ENCODE measurements at regions of chr11 and their contacts with region 1.

Region 1: GRCh38 chr11:126480410-126481302 is 125.2 kb downstream of the ST3GAL4 start:
- DNase-seq: peak; percentile 87
- H3K4me3 Mint-ChIP-seq: no peak overlapping the region
- H3K27ac Mint-ChIP-seq: peak overlapping the region; percentile 76
- H3K4me1 Mint-ChIP-seq: peaks cover 7% of the 10 kb centered on the region
- H3K27me3 Mint-ChIP-seq: no peaks in the 10 kb centered on the region
- CTCF ChIP-seq: peak; percentile 90

Region 2: GRCh38 chr11:126303623-126304456 is 176.8 kb before region 1 on chr11 and contains the start of gene DCPS:
- CTCF ChIA-PET with region 1: interaction called, 297 read pairs
- POLR2A ChIA-PET with region 1: interaction called, 10 read pairs
- intact Hi-C with region 1: no loop called
- DNase-seq: peak; percentile 88
- H3K4me3 Mint-ChIP-seq: peak within 1 kb of the TSS; percentile 89
- H3K27ac Mint-ChIP-seq: peak within 1 kb of the TSS; percentile 79
- H3K4me1 Mint-ChIP-seq: peaks cover 6% of the 10 kb centered on the region
- H3K27me3 Mint-ChIP-seq: no peaks in the 10 kb centered on the region
- CTCF ChIP-seq: no peak
- total RNA-seq, gene DCPS: 29.6 and 33.7 TPM in 2 replicates

Region 3: GRCh38 chr11:126318574-126319373 is 161.9 kb before region 1 on chr11:
- CTCF ChIA-PET with region 1: interaction called, 297 read pairs
- POLR2A ChIA-PET with region 1: interaction called, 5 read pairs
- intact Hi-C with region 1: no loop called
- DNase-seq: peak; percentile 74
- H3K4me3 Mint-ChIP-seq: peak overlapping the region; percentile 59
- H3K27ac Mint-ChIP-seq: peak overlapping the region; percentile 84
- H3K4me1 Mint-ChIP-seq: peaks cover 33% of the 10 kb centered on the region
- H3K27me3 Mint-ChIP-seq: no peaks in the 10 kb centered on the region
- CTCF ChIP-seq: no peak

Region 4: DNA sequence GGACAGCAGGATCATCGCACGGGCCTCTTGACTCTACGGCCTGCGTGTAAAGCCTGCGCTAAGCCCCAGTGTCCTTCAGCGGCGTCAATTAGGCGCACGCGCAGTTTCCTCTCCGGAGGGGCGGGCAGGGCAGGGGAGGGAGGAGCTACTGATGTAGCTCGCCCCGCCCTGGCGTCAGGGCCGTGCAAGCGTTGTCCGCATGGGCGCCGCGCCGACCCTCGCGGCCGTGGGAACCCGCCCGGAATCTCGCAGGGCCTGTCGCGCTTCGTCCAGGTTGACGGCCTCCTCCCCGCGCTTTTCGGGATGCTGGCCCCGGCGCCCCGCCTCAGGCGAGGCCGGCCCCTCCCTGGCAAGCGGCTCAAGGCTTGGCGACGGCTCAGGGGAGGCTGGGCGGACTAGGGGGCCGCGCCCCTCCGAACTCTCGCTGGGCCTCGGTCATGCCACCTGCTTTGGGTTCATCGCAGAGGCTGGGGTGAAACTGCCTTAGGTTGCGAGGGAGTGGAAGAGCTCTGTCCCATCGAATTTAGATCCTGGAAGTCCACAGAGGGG is 64.0 kb before region 1 on chr11:
- CTCF ChIA-PET with region 1: interaction called, 16 read pairs
- POLR2A ChIA-PET with region 1: no interaction called
- intact Hi-C with region 1: no loop called
- DNase-seq: no peak
- H3K4me3 Mint-ChIP-seq: no peak overlapping the region
- H3K27ac Mint-ChIP-seq: peak overlapping the region; percentile 23
- H3K4me1 Mint-ChIP-seq: no peaks in the 10 kb centered on the region
- H3K27me3 Mint-ChIP-seq: no peaks in the 10 kb centered on the region
- CTCF ChIP-seq: no peak

Region 5: GRCh38 chr11:126446581-126446980 is 34.1 kb before region 1 on chr11:
- CTCF ChIA-PET with region 1: interaction called, 111 read pairs
- POLR2A ChIA-PET with region 1: no interaction called
- intact Hi-C with region 1: loop called (anchors 1 kb)
- DNase-seq: no peak
- H3K4me3 Mint-ChIP-seq: no peak overlapping the region
- H3K27ac Mint-ChIP-seq: no peak overlapping the region
- H3K4me1 Mint-ChIP-seq: no peaks in the 10 kb centered on the region
- H3K27me3 Mint-ChIP-seq: no peaks in the 10 kb centered on the region
- CTCF ChIP-seq: no peak

Region 6: DNA sequence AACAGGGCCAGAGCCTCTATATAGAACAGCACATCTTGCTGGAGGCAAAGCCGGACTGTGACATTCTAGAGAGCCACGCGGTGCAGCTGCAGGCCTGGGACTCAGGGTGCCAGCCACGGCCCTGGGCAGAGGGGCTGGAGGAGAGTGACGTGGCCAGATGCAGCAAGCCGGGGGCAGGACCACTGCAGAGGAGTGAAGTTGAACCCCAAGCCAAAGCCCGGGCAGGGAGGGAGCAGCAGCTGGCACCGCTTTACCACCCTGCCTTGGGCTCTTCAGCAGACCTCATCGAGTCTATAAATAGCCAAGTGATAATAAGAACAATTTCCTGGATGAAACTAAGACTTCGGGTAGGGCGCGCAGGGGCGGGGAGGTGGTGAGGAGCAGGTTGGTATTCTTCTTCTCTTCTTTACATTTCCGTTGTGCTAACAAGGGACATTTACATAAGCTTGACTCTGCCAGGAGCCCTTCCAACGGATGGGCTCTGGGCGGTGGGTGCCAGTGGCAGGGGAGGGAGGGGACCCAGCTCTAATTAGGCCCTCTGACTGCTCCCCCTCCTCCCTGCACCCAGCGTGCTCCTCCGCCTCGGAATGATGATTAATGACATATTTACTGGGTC is 15.0 kb before region 1 on chr11:
- CTCF ChIA-PET with region 1: interaction called, 30 read pairs
- POLR2A ChIA-PET with region 1: no interaction called
- intact Hi-C with region 1: no loop called
- DNase-seq: no peak
- H3K4me3 Mint-ChIP-seq: no peak overlapping the region
- H3K27ac Mint-ChIP-seq: no peak overlapping the region
- H3K4me1 Mint-ChIP-seq: no peaks in the 10 kb centered on the region
- H3K27me3 Mint-ChIP-seq: peaks cover 35% of the 10 kb centered on the region
- CTCF ChIP-seq: no peak

Region 7: GRCh38 chr11:126523441-126524205 is 43.0 kb after region 1 on chr11:
- CTCF ChIA-PET with region 1: interaction called, 11 read pairs
- POLR2A ChIA-PET with region 1: no interaction called
- intact Hi-C with region 1: no loop called
- DNase-seq: no peak
- H3K4me3 Mint-ChIP-seq: no peak overlapping the region
- H3K27ac Mint-ChIP-seq: no peak overlapping the region
- H3K4me1 Mint-ChIP-seq: no peaks in the 10 kb centered on the region
- H3K27me3 Mint-ChIP-seq: peaks cover 9% of the 10 kb centered on the region
- CTCF ChIP-seq: no peak

Region 8: DNA sequence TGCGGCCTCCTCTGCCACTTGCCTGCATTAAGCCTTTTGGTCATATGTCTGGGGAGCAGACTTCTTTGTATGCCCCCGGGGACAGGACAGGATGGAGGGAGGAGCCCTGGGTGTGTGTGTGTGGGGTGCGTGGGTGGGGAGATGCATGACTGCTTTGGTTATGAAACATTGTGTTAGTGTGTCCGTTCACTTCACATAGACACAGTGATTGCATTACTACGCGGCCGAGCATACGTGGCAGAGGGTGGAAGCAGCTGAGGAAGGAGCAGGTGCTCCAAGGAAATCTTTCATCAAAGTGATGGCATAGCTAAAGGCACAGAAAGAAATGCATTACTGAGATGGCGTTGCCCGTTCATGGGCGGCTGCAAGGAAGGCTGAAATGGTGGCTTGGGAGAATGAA is 135.2 kb after region 1 on chr11:
- CTCF ChIA-PET with region 1: no interaction called
- POLR2A ChIA-PET with region 1: no interaction called
- intact Hi-C with region 1: no loop called
- DNase-seq: no peak
- H3K4me3 Mint-ChIP-seq: no peak overlapping the region
- H3K27ac Mint-ChIP-seq: no peak overlapping the region
- H3K4me1 Mint-ChIP-seq: no peaks in the 10 kb centered on the region
- H3K27me3 Mint-ChIP-seq: peaks cover 50% of the 10 kb centered on the region
- CTCF ChIP-seq: no peak

Region 9: DNA sequence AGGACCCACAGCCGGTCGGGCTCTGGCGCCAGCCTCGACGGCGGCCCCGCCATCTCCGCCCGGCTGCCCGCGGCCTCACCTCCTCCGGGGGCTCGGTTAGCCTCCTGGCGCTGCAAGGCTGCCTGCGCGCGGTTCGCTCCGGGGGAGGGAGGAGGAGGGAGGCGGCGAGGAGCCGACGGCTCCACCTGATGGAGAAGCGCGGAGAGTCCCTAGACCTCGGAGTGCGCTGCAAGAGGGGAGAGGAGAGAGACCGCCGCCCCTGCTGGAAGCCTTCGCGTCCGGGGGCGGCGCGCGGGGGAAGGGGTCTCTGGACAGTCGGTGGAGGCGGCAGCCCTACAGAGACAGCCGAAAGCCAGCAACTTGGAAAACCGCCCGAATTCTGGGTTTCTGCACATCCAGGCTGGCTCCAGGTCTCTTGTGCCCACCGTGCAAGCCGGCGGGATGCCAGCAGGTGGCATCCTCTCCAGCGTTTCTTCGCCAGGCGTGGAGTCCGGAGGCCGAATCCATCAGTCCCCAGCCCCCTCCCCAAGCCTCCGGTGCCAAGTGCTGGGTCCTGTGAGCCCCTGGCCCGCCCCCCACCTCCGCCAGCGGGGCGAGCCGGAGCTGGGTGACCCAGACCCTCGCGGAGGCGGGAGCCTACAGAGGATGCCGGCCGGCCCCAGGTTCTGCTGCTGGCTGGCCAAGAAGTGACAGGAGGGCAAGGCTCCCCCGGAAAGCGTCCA is 522.8 kb after region 1 on chr11:
- CTCF ChIA-PET with region 1: no interaction called
- POLR2A ChIA-PET with region 1: no interaction called
- intact Hi-C with region 1: no loop called
- DNase-seq: no peak
- H3K4me3 Mint-ChIP-seq: no peak overlapping the region
- H3K27ac Mint-ChIP-seq: no peak overlapping the region
- H3K4me1 Mint-ChIP-seq: no peaks in the 10 kb centered on the region
- H3K27me3 Mint-ChIP-seq: no peaks in the 10 kb centered on the region
- CTCF ChIP-seq: no peak

Measured in MCF 10A (cell line).